ENCODE measurements at regions of chr16 and their contacts with region 1.

Region 1: DNA sequence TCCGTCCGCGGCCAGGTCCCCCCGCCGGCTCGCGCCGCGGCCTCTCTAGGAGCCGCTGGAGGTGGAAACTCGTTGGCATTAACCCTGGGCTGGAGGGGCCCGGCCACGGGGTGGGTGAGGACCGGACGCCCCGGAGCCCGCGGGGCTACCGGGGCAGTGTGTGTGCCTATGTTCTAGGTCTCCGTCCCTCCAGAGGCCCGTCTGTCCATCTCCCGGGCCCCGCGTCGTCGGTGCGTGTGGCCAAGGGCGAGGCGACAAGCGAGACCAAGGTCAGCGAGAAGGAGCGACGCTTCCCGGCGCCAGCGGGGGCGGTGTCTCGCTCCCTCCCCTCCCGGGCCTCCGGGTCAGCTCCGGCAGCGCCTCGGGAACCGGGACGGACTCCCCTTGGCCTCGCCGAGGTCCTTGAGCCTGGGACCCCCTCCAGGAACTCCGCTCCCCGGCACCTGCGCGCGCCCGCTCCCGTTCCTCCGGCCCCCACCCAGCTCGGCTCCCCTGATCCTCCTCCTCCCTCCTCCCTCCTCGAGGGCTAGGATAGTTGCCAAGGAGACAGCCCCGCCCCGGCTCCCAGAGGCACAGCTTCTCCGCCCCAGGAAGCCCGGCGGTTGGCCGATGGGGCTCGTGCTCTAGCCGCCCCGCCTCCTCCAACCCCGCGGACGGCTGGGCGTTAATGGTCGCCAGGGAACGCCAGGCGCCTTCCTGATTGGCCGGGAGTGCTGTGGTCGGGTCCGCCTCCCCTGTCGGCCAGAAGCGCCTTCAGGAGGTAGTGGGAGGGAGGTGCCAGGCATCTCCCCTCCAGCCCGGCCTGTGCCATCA is 663 bp upstream of the ZNF768 start:
- DNase-seq: peak; percentile 94
- ATAC-seq: peak; percentile 82
- H3K4me3 ChIP-seq: peak overlapping the region; percentile 59 to 97 (median 82)
- H3K4me3 Mint-ChIP-seq: peak overlapping the region; percentile 88
- H3K27ac ChIP-seq: peak overlapping the region; percentile 87 to 89
- H3K27ac Mint-ChIP-seq: peak overlapping the region; percentile 96
- H3K4me1 ChIP-seq: peaks cover 13 to 30% of the 10 kb centered on the region in 2 donors
- H3K4me1 Mint-ChIP-seq: peaks cover 20% of the 10 kb centered on the region
- H3K27me3 ChIP-seq: no peaks in the 10 kb centered on the region
- H3K27me3 Mint-ChIP-seq: no peaks in the 10 kb centered on the region
- CTCF ChIP-seq: peak; percentile 6

Region 2: GRCh38 chr16:30378236-30379204 is 148.5 kb before region 1 on chr16:
- CTCF ChIA-PET with region 1: interaction called, 3 read pairs
- POLR2A ChIA-PET with region 1: interaction called, 4 read pairs
- intact Hi-C with region 1: loop called (anchors 2 kb)
- DNase-seq: peak; percentile 99
- ATAC-seq: peak; percentile 85
- H3K4me3 ChIP-seq: peak overlapping the region; percentile 42 to 87 (median 68)
- H3K4me3 Mint-ChIP-seq: peak overlapping the region; percentile 94
- H3K27ac ChIP-seq: peak overlapping the region; percentile 97 to 100
- H3K27ac Mint-ChIP-seq: peak overlapping the region; percentile 100
- H3K4me1 ChIP-seq: peaks cover 34 to 64% of the 10 kb centered on the region in 2 donors
- H3K4me1 Mint-ChIP-seq: peaks cover 50% of the 10 kb centered on the region
- H3K27me3 ChIP-seq: no peaks in the 10 kb centered on the region
- H3K27me3 Mint-ChIP-seq: no peaks in the 10 kb centered on the region
- CTCF ChIP-seq: no peak

Region 3: GRCh38 chr16:30429678-30430427 is 97.2 kb before region 1 on chr16 and contains the start of gene DCTPP1:
- CTCF ChIA-PET with region 1: interaction called, 10 read pairs
- POLR2A ChIA-PET with region 1: interaction called, 8 read pairs
- intact Hi-C with region 1: loop called (anchors 1 kb)
- DNase-seq: peak; percentile 99
- ATAC-seq: peak; percentile 97
- H3K4me3 ChIP-seq: peak within 1 kb of the TSS; percentile 78 to 98 (median 85)
- H3K4me3 Mint-ChIP-seq: no peak within 1 kb of the TSS
- H3K27ac ChIP-seq: peak within 1 kb of the TSS; percentile 79 to 86
- H3K27ac Mint-ChIP-seq: peak within 1 kb of the TSS; percentile 20
- H3K4me1 ChIP-seq: peaks cover 12 to 21% of the 10 kb centered on the region in 2 donors
- H3K4me1 Mint-ChIP-seq: peaks cover 17% of the 10 kb centered on the region
- H3K27me3 ChIP-seq: no peaks in the 10 kb centered on the region
- H3K27me3 Mint-ChIP-seq: no peaks in the 10 kb centered on the region
- CTCF ChIP-seq: peak; percentile 82
- total RNA-seq, gene DCTPP1: 25.0 and 28.9 TPM in 2 replicates

Region 4: GRCh38 chr16:30458561-30459394 is 68.3 kb before region 1 on chr16:
- CTCF ChIA-PET with region 1: interaction called, 3 read pairs
- POLR2A ChIA-PET with region 1: interaction called, 6 read pairs
- intact Hi-C with region 1: loop called (anchors 5 kb)
- DNase-seq: peak; percentile 83
- ATAC-seq: peak; percentile 93
- H3K4me3 ChIP-seq: peak overlapping the region in 3 of 5 experiments; percentile 3 to 17 (median 9)
- H3K4me3 Mint-ChIP-seq: peak overlapping the region; percentile 80
- H3K27ac ChIP-seq: peak overlapping the region; percentile 69 to 70
- H3K27ac Mint-ChIP-seq: peak overlapping the region; percentile 97
- H3K4me1 ChIP-seq: peaks cover 13 to 37% of the 10 kb centered on the region in 2 donors
- H3K4me1 Mint-ChIP-seq: peaks cover 52% of the 10 kb centered on the region
- H3K27me3 ChIP-seq: no peaks in the 10 kb centered on the region
- H3K27me3 Mint-ChIP-seq: no peaks in the 10 kb centered on the region
- CTCF ChIP-seq: no peak

Region 5: DNA sequence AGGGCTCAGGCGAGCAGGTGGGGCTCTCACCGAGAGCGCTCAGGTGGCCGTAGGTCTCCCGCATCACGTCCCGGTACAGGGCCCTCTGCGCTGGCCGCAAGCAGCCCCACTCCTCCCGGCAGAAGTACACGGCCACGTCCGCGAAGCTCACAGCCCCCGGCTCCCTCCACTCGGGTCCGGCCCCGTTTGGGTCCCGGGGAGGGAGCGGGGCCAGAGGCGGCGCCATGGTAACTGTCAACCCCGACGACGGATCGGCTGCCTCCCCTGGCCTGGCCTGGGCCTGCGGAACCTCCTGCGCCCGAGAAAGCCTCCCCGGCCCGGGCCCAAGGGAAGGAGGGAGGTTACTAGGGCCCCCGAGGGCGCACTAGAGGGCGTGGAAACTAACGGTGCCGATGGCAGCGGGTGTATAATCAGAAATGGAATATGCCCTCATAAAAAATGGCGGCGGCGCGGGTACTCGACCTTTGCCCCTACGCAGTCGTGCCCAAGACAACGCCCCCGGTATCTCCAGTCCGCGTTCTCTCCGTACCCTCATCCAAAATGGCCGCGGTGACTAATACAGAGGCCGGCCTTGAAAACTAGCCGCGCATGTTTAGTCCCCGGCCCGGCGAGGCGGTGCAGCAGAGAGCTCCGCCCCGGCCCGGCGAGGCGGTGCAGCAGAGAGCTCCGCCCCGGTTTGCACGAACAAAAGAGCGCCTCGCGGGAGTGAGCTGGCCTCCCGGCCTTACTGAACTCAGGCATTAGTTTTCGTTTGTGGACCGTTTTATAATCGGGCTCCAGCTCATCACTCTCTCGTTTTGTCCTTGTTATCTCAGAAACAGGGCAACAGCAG is 31.1 kb after region 1 on chr16 and contains the start of gene ZNF764:
- CTCF ChIA-PET with region 1: interaction called, 5 read pairs
- POLR2A ChIA-PET with region 1: interaction called, 12 read pairs
- intact Hi-C with region 1: loop called (anchors 1 kb)
- DNase-seq: peak; percentile 97
- ATAC-seq: peak; percentile 92
- H3K4me3 ChIP-seq: peak within 1 kb of the TSS in 4 of 5 experiments; percentile 80 to 91 (median 88)
- H3K4me3 Mint-ChIP-seq: peak within 1 kb of the TSS; percentile 86
- H3K27ac ChIP-seq: peak within 1 kb of the TSS; percentile 95 to 97
- H3K27ac Mint-ChIP-seq: peak within 1 kb of the TSS; percentile 91
- H3K4me1 ChIP-seq: peaks cover 14 to 35% of the 10 kb centered on the region in 2 donors
- H3K4me1 Mint-ChIP-seq: peaks cover 42% of the 10 kb centered on the region
- H3K27me3 ChIP-seq: no peaks in the 10 kb centered on the region
- H3K27me3 Mint-ChIP-seq: no peaks in the 10 kb centered on the region
- CTCF ChIP-seq: no peak
- total RNA-seq, gene ZNF764: 19.7 and 20.9 TPM in 2 replicates

Region 6: DNA sequence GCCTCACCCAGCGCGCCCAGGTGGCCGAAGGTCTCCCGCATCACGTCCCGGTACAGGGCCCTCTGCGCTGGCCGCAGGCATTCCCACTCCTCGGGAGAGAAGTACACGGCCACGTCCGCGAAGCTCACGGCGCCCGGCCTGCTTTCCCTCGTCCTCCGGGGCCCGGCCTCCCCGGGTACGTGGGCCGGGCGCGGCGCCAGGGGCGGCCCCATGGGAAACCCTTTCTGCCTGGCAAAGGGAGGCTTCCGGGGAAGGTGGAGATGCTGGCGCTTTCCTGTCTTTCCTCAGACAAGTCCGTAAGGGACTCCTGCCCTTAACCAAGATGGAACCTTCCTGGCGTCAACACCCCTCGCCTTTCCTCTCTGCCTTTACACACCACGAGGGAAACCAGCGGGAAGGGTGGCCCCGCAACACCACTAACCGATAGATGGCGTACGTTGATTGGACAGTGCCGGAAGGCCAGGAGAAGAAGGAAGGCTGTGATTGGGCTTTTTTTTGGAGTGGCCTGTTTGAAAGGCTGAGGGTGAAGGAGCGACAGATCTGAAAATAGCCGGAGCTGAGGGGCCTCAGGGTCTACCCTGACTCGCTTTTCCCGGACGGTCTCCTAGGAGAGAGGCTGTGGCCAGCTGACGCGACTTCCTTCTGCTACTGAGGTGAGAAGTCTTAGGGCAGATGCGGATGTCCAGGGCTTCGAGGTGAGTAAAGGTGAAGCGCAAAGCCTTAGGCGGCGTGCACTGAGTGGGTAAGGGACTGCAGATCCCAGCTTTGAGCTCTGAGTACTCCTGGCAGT is 58.6 kb after region 1 on chr16 and contains the start of gene ZNF785:
- CTCF ChIA-PET with region 1: interaction called, 3 read pairs
- POLR2A ChIA-PET with region 1: no interaction called
- intact Hi-C with region 1: loop called (anchors 2 kb)
- DNase-seq: peak; percentile 95
- ATAC-seq: peak; percentile 99
- H3K4me3 ChIP-seq: peak within 1 kb of the TSS; percentile 56 to 89 (median 75)
- H3K4me3 Mint-ChIP-seq: peak within 1 kb of the TSS; percentile 85
- H3K27ac ChIP-seq: peak within 1 kb of the TSS; percentile 29 to 82
- H3K27ac Mint-ChIP-seq: peak within 1 kb of the TSS; percentile 71
- H3K4me1 ChIP-seq: peaks cover 8 to 21% of the 10 kb centered on the region in 2 donors
- H3K4me1 Mint-ChIP-seq: peaks cover 22% of the 10 kb centered on the region
- H3K27me3 ChIP-seq: no peaks in the 10 kb centered on the region
- H3K27me3 Mint-ChIP-seq: no peaks in the 10 kb centered on the region
- CTCF ChIP-seq: no peak
- total RNA-seq, gene ZNF785: 39.7 and 44.6 TPM in 2 replicates

Region 7: DNA sequence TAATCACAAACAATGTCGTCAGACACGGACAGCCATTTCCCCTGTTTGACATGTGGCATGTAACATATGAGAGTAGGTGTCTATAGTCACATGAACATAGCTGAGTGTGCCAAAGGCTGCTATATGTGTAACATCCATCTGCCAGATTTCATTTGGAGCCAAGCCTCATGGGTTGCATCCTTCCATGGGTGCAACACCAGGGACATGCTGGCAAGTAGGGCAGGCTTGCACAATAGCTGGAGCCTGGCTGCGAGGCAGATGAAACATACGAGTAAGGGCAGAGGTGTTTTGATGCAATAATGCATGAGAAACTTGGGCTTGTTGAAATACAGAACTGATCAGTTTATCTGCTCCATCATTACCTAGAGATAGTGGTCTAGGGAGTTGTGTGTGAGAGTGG is 92.2 kb after region 1 on chr16:
- CTCF ChIA-PET with region 1: no interaction called
- POLR2A ChIA-PET with region 1: no interaction called
- intact Hi-C with region 1: no loop called
- DNase-seq: no peak
- ATAC-seq: no peak
- H3K4me3 ChIP-seq: no peak overlapping the region
- H3K4me3 Mint-ChIP-seq: no peak overlapping the region
- H3K27ac ChIP-seq: no peak overlapping the region
- H3K27ac Mint-ChIP-seq: no peak overlapping the region
- H3K4me1 ChIP-seq: peaks cover under 1 to 2% of the 10 kb centered on the region in 2 donors
- H3K4me1 Mint-ChIP-seq: peaks cover 2% of the 10 kb centered on the region
- H3K27me3 ChIP-seq: no peaks in the 10 kb centered on the region
- H3K27me3 Mint-ChIP-seq: peaks cover 21% of the 10 kb centered on the region
- CTCF ChIP-seq: no peak

Region 8: DNA sequence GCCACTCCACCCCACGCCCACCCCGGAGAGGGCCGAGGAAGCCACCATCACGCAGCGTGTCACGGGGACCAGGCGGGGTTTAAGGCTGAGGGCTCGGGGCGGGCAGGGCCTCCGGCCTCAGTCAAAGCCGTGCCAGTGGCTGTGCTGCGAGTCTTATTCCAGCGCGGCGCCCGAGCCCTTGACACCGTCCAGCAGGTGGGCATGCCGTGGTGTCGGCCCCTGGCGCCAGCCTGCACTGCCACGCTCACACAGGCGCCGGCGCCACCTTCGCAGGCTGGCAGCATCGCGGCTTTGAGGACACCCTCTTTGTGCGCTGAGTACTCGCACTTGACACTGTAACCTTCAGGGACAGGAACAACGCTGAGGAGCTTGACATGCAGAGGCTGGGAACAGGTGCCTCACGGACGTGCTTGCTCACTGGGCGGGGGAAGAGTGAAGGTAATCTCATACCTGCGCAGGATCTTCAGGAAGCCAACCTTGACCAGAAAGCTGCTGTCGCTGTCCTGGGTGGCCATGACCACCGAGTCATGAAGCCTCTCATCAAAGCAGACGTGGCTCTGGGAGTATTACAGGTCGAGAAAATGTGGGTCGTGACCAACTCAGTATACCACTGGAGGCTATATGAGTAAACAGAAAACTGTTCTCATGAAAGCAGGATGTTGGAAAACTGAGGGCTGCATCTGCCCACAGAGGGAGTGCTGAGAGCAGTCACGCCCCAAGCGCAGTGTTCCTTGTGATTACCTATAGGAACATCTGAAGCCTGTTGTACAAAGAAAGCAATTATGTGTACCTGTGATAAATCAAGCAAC is 294.1 kb after region 1 on chr16:
- CTCF ChIA-PET with region 1: no interaction called
- POLR2A ChIA-PET with region 1: no interaction called
- intact Hi-C with region 1: no loop called
- DNase-seq: no peak
- ATAC-seq: no peak
- H3K4me3 ChIP-seq: no peak overlapping the region
- H3K4me3 Mint-ChIP-seq: no peak overlapping the region
- H3K27ac ChIP-seq: no peak overlapping the region
- H3K27ac Mint-ChIP-seq: no peak overlapping the region
- H3K4me1 ChIP-seq: no peaks in the 10 kb centered on the region
- H3K4me1 Mint-ChIP-seq: no peaks in the 10 kb centered on the region
- H3K27me3 ChIP-seq: peaks cover 0 to 3% (median 0%) of the 10 kb centered on the region in 4 experiments
- H3K27me3 Mint-ChIP-seq: peaks cover 5% of the 10 kb centered on the region
- CTCF ChIP-seq: no peak